ENCODE measurements at regions of chr1 and their contacts with region 1.

Region 1: DNA sequence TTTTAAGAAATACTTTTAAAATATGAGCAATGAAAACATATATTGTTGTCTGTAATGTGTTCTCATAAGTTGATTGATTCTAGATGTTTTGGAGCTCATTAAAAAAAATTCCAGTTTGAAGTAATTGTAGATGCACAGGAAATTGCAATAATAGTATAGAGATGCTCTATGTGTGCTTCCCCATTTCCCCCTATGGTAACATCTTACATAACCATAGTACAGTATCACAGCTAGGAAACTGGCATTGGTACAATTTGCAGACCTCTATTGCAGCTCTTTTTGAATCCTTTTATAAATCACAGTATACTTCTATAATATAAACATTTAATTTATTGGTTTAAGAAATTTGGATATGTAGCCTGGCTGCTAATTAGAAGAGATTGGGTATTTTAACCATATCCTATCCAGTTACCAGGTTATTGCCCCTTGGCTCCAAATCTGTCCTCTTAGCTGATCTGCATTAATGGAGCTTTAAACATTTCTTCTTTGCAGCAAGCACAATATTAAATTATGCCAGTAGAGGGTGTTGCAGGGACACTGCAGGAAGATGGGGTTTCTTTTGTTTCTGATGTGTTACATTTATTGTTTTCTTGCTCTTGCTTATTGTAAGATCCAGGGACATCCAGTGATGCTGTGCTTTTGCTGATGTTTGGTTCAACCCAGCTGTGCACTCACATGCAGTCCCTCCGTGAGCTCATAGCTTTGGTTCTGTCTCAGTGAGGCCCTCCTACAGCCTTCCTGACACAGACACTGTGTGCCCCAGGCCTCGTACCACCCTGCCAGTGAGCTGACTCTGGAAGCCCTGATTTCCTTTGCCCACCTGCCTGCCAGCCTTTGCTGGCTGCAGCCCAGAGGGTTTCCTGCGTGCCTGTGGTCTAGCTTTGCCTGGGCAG is 103.3 kb downstream of the RABGAP1L start:
- DNase-seq: peak; percentile 12
- H3K4me3 Mint-ChIP-seq: no peak overlapping the region
- H3K27ac Mint-ChIP-seq: no peak overlapping the region
- H3K4me1 Mint-ChIP-seq: no peaks in the 10 kb centered on the region
- H3K27me3 Mint-ChIP-seq: no peaks in the 10 kb centered on the region

Region 2: GRCh38 chr1:174276087-174276486 is 13.5 kb after region 1 on chr1:
- CTCF ChIA-PET with region 1: interaction called, 10 read pairs
- intact Hi-C with region 1: no loop called
- DNase-seq: no peak
- H3K4me3 Mint-ChIP-seq: no peak overlapping the region
- H3K27ac Mint-ChIP-seq: no peak overlapping the region
- H3K4me1 Mint-ChIP-seq: no peaks in the 10 kb centered on the region
- H3K27me3 Mint-ChIP-seq: no peaks in the 10 kb centered on the region

Region 3: DNA sequence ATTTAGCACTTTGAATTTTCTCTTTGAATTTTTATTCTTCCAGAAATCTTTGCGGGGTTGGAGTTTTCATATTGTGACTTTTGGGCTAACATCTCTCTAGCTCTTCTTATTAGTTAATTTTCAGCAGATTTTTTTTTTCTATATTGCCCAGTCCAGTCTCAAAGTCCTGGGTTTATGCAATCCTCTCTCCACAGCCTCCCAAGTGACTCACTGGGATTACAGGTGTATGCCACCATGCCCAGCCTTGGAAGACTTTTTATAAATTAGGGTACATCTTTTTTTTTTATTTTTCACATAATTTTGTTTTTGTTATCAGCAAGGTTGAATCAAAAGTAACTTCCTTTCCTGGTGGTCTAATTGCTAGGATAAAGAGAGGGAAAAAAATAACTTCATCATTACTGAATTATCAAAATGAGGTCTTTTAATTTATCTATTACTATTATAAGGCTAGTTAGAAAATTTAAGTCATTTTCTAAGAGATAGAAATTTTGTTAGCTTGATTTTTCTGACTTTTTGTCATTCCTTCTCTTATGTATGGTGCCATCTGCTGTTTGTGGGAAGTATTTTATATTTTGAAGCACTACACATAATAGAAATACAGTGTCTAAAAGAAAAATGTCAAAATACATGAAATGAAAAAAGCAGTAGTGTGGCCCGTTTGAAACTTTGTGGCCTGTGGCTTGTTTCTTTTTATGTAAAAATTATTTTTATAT is 463.7 kb after region 1 on chr1:
- CTCF ChIA-PET with region 1: interaction called, 11 read pairs
- intact Hi-C with region 1: loop called (anchors 1 kb)
- DNase-seq: no peak
- H3K4me3 Mint-ChIP-seq: no peak overlapping the region
- H3K27ac Mint-ChIP-seq: no peak overlapping the region
- H3K4me1 Mint-ChIP-seq: no peaks in the 10 kb centered on the region
- H3K27me3 Mint-ChIP-seq: no peaks in the 10 kb centered on the region

Region 4: DNA sequence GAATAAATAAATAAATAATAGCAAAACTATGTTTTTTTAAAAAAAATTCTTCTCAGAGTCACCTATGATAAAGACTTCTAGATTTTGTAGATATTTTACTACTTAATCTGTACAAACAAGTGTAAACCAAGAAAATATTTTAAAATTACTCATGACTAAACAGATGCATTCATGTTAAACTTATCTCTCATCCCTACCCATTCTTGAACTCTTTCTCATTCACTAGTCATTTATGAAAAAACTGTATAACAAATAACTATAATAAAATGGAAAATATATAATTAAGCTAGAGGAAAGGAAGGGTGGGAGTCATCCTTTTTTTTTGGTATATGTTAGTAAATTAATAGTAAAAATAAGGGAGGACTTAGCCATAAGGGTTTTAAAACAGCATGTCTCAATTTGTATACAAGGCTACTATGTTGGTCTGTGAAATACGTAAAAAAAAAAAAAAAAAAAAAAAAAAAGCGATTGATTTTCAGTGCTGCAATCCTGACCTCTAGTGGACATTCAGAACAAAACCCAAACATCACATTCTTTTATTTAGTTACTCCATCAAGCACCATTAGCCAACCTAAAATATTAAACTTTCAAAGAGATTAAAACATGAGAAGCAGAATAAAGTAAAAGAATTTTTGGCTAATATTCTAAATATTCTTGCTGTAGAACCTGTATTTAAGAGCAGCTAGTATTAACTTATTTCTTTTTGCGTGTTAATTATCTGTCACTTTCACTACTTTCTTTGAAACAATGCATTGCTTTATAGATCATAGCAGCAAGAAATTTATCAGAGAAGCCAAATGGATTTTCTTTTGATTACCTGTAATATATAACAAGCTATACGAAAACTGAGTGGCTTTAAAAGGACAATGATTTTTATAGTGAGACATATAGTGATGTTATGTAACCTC is 481.3 kb after region 1 on chr1:
- CTCF ChIA-PET with region 1: interaction called, 59 read pairs
- intact Hi-C with region 1: loop called (anchors 1 kb)
- DNase-seq: no peak
- H3K4me3 Mint-ChIP-seq: no peak overlapping the region
- H3K27ac Mint-ChIP-seq: no peak overlapping the region
- H3K4me1 Mint-ChIP-seq: peaks cover 10% of the 10 kb centered on the region
- H3K27me3 Mint-ChIP-seq: no peaks in the 10 kb centered on the region

Region 5: GRCh38 chr1:174982971-174983689 is 720.5 kb after region 1 on chr1:
- CTCF ChIA-PET with region 1: no interaction called
- intact Hi-C with region 1: loop called (anchors 2 kb)
- DNase-seq: peak; percentile 56
- H3K4me3 Mint-ChIP-seq: no peak overlapping the region
- H3K27ac Mint-ChIP-seq: no peak overlapping the region
- H3K4me1 Mint-ChIP-seq: peaks cover 18% of the 10 kb centered on the region
- H3K27me3 Mint-ChIP-seq: no peaks in the 10 kb centered on the region

Region 6: GRCh38 chr1:175129997-175130648 is 867.5 kb after region 1 on chr1:
- CTCF ChIA-PET with region 1: no interaction called
- intact Hi-C with region 1: loop called (anchors 5 kb)
- DNase-seq: no peak
- H3K4me3 Mint-ChIP-seq: no peak overlapping the region
- H3K27ac Mint-ChIP-seq: no peak overlapping the region
- H3K4me1 Mint-ChIP-seq: no peaks in the 10 kb centered on the region
- H3K27me3 Mint-ChIP-seq: peaks cover 5% of the 10 kb centered on the region